Panc1 (cell line): ENCODE measurements at regions of chr11 and their contacts with region 1.

Region 1: DNA sequence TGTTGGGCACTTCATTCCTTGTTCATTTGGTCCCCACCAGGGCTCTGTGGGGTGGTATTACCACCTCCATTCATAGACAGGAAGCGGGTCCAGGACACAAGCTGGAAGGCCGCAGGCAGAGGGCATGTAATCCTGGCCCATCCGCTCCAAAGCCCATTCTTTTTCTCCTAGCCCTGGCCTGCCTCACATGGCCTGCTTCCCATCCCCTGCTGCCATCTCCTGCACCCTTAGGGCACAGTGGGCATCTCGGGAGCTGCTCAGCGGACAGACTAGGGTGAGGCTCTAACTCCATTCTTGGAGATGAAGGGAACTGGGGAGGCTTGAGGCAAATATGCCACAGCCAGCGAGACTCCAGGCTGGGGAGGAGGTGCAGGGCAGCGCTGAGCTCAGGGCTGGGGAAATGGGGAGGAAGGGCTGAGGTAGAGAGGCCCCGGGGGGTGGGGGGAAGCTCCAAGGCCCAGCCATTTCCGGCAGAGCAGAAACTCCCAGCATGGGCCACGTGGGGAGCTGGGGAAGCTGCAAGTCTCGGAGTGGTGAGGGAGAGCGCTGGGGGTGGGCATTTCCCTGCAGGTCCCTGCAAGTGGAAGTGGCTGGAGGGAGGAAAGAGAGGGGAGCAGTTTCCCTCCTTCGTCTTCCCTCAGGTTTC is 14.3 kb upstream of the BCL9L start:
- DNase-seq: no peak
- ATAC-seq: peak; percentile 59
- H3K4me3 ChIP-seq: no peak overlapping the region
- H3K27ac ChIP-seq: no peak overlapping the region
- H3K4me1 ChIP-seq: peaks cover 3% of the 10 kb centered on the region; the same call in 1 of the 2 replicates
- H3K27me3 ChIP-seq: no peaks in the 10 kb centered on the region
- CTCF ChIP-seq: no peak

Region 2: GRCh38 chr11:118488480-118489109 is 451.5 kb before region 1 on chr11:
- CTCF ChIA-PET with region 1: no interaction called
- POLR2A ChIA-PET with region 1: no interaction called
- in situ Hi-C with region 1: no loop called
- intact Hi-C with region 1: no loop called
- DNase-seq: peak; percentile 59
- ATAC-seq: peak; percentile 86
- H3K4me3 ChIP-seq: no peak overlapping the region
- H3K27ac ChIP-seq: no peak overlapping the region
- H3K4me1 ChIP-seq: no peaks in the 10 kb centered on the region
- H3K27me3 ChIP-seq: no peaks in the 10 kb centered on the region
- CTCF ChIP-seq: peak; percentile 93

Region 3: GRCh38 chr11:118581057-118581456 is 359.0 kb before region 1 on chr11:
- CTCF ChIA-PET with region 1: interaction called, 11 read pairs
- POLR2A ChIA-PET with region 1: no interaction called
- in situ Hi-C with region 1: no loop called
- intact Hi-C with region 1: no loop called
- DNase-seq: no peak
- ATAC-seq: no peak
- H3K4me3 ChIP-seq: no peak overlapping the region
- H3K27ac ChIP-seq: no peak overlapping the region
- H3K4me1 ChIP-seq: no peaks in the 10 kb centered on the region
- H3K27me3 ChIP-seq: no peaks in the 10 kb centered on the region
- CTCF ChIP-seq: no peak

Region 4: GRCh38 chr11:118684187-118684586 is 255.9 kb before region 1 on chr11:
- CTCF ChIA-PET with region 1: interaction called, 11 read pairs
- POLR2A ChIA-PET with region 1: no interaction called
- in situ Hi-C with region 1: no loop called
- intact Hi-C with region 1: no loop called
- DNase-seq: no peak
- ATAC-seq: no peak
- H3K4me3 ChIP-seq: no peak overlapping the region
- H3K27ac ChIP-seq: no peak overlapping the region
- H3K4me1 ChIP-seq: no peaks in the 10 kb centered on the region
- H3K27me3 ChIP-seq: peaks cover 2% of the 10 kb centered on the region; the same call in 1 of the 2 replicates
- CTCF ChIP-seq: no peak

Region 5: DNA sequence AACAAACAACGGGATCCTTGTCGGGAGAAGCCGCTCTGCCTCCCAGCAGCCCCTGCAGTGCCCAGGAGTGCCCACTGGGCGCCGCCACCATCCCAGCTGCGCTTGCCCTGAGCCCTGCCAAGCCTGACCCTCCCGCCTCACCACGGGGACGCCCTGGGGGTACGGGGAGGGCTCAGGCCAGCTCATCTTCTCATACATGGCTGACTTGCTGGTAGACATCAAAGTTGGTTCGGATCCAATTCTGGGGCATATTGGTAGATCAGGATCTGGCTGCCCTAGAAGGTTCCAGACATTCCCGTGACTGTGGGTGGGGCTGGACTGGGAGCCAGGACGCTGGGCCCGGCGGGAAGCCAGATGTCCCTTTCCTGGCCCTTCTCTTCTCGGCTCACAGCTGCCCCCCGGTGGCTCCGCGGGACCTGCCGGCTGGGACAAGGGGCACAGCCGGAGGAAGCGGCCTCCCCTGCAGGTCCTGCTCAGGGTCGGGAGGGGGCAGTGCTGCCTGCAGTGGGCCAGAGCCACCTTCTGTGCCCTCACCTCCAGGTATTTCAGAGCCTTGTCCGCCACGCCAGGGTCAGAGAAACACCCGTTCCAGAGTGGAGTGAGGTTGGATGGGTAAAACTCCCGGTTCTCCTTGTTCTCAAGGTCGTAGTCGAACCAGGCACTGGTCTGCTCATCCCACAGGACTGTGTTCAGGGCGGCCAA is 250.1 kb before region 1 on chr11:
- CTCF ChIA-PET with region 1: interaction called, 3 read pairs
- POLR2A ChIA-PET with region 1: interaction called, 15 read pairs
- in situ Hi-C with region 1: no loop called
- intact Hi-C with region 1: no loop called
- DNase-seq: peak; percentile 72
- ATAC-seq: peak; percentile 97
- H3K4me3 ChIP-seq: peak overlapping the region; percentile 43 to 74
- H3K27ac ChIP-seq: peak overlapping the region; percentile 93
- H3K4me1 ChIP-seq: peaks cover 3% of the 10 kb centered on the region
- H3K27me3 ChIP-seq: peaks cover 2% of the 10 kb centered on the region; the same call in 1 of the 2 replicates
- CTCF ChIP-seq: peak; percentile 100

Region 6: DNA sequence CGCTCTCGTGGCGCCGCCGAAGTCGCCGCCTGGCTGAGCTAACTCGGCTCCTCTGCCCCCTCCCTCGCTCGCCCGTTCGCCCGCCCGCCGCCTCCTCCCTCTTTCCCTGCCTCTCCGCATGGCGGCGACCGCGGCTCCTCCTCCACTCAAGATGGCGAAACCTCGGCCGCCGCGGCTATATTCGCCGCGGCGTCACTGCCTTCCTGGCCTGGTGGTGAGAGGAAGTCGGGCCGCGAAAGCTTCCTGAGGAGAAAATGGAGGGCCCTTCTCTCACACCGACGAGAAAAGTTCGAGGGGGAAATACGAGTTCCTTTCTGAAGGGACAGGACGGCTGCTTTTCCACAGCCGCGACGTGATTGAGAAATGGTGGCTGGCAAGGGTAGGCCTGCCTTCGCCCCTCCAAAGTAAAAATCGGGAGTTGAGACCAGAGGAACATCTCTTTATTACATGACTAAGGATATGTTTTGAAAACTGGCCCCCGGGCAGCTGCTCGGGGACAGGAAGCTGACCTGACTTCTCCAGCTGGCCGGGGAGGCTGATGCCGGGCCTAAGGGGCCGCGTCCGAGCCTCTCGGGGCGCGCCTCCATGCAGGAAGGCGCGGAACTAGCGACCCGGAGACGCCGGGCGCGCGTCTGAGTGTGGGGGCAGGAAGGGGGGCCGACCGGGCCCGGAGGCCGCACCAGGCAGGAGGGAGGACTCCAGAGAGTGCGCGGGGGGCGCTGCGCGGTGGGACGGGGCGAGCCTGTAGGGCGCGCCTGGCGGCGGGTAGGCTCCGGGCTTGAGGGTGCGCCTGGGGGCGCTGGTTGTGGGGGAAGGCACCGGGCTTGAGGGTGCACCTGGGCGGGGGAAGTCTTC is 148.7 kb before region 1 on chr11 and contains the start of gene DDX6:
- CTCF ChIA-PET with region 1: interaction called, 14 read pairs
- POLR2A ChIA-PET with region 1: interaction called, 15 read pairs
- in situ Hi-C with region 1: no loop called
- intact Hi-C with region 1: no loop called
- DNase-seq: no peak
- ATAC-seq: peak; percentile 84
- H3K4me3 ChIP-seq: peak within 1 kb of the TSS; percentile 77 to 91
- H3K27ac ChIP-seq: peak within 1 kb of the TSS; percentile 99
- H3K4me1 ChIP-seq: peaks cover 24% of the 10 kb centered on the region
- H3K27me3 ChIP-seq: no peaks in the 10 kb centered on the region
- CTCF ChIP-seq: no peak; the same call in 1 of the 2 replicates
- total RNA-seq, gene DDX6: 155 TPM

Region 7: DNA sequence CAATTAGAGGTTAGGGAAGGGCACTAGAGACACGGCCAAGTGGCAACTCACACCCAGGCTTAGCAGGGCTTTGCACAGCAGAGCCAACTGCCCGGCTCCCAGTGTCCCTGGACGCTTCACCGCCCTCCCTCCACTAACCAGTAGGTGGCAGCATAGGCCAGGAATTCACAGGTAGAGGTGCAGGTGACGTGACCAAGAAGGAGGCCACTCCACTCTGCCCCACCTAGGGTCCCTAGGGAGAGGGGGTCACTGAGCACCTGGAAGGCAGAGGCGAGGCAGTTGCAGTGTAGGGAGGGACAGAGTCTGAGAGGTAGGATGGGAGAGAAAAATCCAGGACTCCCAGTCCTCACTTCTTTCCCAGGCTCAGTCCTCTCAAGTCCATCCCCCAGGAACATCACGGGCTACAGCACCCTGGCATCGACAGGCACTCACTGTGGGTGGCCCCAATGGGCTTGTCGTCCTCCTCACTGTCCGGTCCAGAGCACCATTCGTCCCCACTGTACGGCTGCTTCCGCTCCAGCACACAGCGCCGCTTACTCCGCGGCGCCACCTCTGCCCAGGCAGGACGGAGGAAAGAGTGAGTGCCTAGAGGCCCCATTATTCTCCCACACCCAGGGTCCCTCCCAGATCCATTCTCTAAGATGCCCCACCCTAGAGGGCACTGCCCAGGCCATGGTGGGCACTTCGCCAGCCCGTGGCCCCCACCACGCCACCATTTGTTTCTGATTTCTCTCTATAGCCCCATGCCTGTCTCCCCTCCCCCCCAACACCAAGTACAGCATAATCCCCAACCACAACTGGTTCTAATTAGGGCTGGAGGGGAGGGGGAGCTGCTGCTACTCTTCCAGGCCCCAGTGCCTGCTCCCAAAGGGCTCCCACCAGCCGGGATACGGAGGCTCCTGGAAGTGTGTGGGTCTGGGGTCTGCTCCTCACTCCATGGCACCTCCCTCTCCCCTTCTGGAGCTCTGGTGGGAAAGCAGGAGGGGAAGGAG is 32.7 kb before region 1 on chr11:
- CTCF ChIA-PET with region 1: interaction called, 8 read pairs
- POLR2A ChIA-PET with region 1: interaction called, 15 read pairs
- in situ Hi-C with region 1: no loop called
- intact Hi-C with region 1: no loop called
- DNase-seq: peak; percentile 86
- ATAC-seq: peak; percentile 53
- H3K4me3 ChIP-seq: peak overlapping the region; percentile 11 to 37
- H3K27ac ChIP-seq: peak overlapping the region; percentile 99
- H3K4me1 ChIP-seq: peaks cover 76% of the 10 kb centered on the region
- H3K27me3 ChIP-seq: no peaks in the 10 kb centered on the region
- CTCF ChIP-seq: peak; percentile 92

Region 8: GRCh38 chr11:118980191-118980881 is 40.3 kb after region 1 on chr11:
- CTCF ChIA-PET with region 1: no interaction called
- POLR2A ChIA-PET with region 1: interaction called, 16 read pairs
- in situ Hi-C with region 1: no loop called
- intact Hi-C with region 1: no loop called
- DNase-seq: no peak
- ATAC-seq: peak; percentile 35; the same call in 1 of the 2 replicates
- H3K4me3 ChIP-seq: no peak overlapping the region
- H3K27ac ChIP-seq: no peak overlapping the region
- H3K4me1 ChIP-seq: no peaks in the 10 kb centered on the region
- H3K27me3 ChIP-seq: no peaks in the 10 kb centered on the region
- CTCF ChIP-seq: no peak